Panc1 (cell line): ENCODE measurements at regions of chr9 and their contacts with region 1.

Region 1: DNA sequence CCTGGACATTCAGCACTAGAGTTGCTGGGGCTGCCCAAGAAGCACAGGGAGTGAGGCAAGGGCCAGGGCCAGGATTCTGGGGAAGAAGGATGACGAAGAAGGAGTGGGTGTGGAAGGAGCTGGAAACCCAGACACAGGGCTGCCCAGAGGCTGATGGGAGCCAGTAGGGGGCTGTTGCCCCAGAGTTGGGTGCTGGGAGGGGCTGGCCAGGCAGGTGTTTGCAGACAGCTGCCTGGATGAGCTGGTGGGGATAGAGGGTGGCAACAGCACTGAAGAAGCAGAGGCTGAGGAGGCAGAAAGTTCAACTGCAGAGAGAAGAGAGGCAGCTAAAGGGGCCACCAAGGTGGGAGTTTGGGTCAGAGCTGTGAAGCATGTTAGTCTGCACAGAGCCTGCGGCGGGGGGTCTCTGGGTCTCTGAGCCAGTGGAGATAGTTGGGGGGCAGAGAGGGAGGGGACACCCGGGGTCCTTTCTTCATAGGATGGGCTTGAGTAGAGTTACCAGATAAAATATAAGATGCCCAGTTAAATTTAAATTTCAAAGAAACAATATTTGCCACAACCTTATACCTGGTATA is 2.5 kb upstream of the AQP7 start:
- DNase-seq: no peak
- ATAC-seq: peak; percentile 46; the same call in 1 of the 2 replicates
- H3K4me3 ChIP-seq: no peak overlapping the region
- H3K27ac ChIP-seq: no peak overlapping the region
- H3K4me1 ChIP-seq: 0 out of 2 replicates have a peak, but pooled peaks cover 3% of the 10 kb centered on the region
- H3K27me3 ChIP-seq: no peaks in the 10 kb centered on the region
- CTCF ChIP-seq: no peak

Region 2: GRCh38 chr9:33415501-33416038 is 10.7 kb after region 1 on chr9:
- CTCF ChIA-PET with region 1: interaction called, 11 read pairs
- POLR2A ChIA-PET with region 1: no interaction called
- in situ Hi-C with region 1: no loop called
- intact Hi-C with region 1: no loop called
- DNase-seq: peak; percentile 67
- ATAC-seq: peak; percentile 88
- H3K4me3 ChIP-seq: no peak overlapping the region
- H3K27ac ChIP-seq: peak overlapping the region; percentile 24; the same call in 1 of the 2 replicates
- H3K4me1 ChIP-seq: peaks cover 27% of the 10 kb centered on the region
- H3K27me3 ChIP-seq: no peaks in the 10 kb centered on the region
- CTCF ChIP-seq: no peak

Region 3: GRCh38 chr9:33446946-33447798 is 42.3 kb after region 1 on chr9 and contains the start of gene AQP3:
- CTCF ChIA-PET with region 1: interaction called, 9 read pairs
- POLR2A ChIA-PET with region 1: interaction called, 11 read pairs
- in situ Hi-C with region 1: no loop called
- intact Hi-C with region 1: loop called (anchors 5 kb)
- DNase-seq: no peak
- ATAC-seq: peak; percentile 89
- H3K4me3 ChIP-seq: peak within 1 kb of the TSS; percentile 20 to 37
- H3K27ac ChIP-seq: no peak within 1 kb of the TSS
- H3K4me1 ChIP-seq: peaks cover 7% of the 10 kb centered on the region; the same call in 1 of the 2 replicates
- H3K27me3 ChIP-seq: peaks cover 3% of the 10 kb centered on the region
- CTCF ChIP-seq: no peak
- total RNA-seq, gene AQP3: 1.0 TPM

Region 4: GRCh38 chr9:33452828-33453271 is 48.0 kb after region 1 on chr9:
- CTCF ChIA-PET with region 1: interaction called, 9 read pairs
- POLR2A ChIA-PET with region 1: interaction called, 11 read pairs
- in situ Hi-C with region 1: no loop called
- intact Hi-C with region 1: loop called (anchors 5 kb)
- DNase-seq: no peak
- ATAC-seq: peak; percentile 74
- H3K4me3 ChIP-seq: no peak overlapping the region
- H3K27ac ChIP-seq: no peak overlapping the region
- H3K4me1 ChIP-seq: no peaks in the 10 kb centered on the region
- H3K27me3 ChIP-seq: peaks cover 2% of the 10 kb centered on the region
- CTCF ChIP-seq: no peak

Region 5: DNA sequence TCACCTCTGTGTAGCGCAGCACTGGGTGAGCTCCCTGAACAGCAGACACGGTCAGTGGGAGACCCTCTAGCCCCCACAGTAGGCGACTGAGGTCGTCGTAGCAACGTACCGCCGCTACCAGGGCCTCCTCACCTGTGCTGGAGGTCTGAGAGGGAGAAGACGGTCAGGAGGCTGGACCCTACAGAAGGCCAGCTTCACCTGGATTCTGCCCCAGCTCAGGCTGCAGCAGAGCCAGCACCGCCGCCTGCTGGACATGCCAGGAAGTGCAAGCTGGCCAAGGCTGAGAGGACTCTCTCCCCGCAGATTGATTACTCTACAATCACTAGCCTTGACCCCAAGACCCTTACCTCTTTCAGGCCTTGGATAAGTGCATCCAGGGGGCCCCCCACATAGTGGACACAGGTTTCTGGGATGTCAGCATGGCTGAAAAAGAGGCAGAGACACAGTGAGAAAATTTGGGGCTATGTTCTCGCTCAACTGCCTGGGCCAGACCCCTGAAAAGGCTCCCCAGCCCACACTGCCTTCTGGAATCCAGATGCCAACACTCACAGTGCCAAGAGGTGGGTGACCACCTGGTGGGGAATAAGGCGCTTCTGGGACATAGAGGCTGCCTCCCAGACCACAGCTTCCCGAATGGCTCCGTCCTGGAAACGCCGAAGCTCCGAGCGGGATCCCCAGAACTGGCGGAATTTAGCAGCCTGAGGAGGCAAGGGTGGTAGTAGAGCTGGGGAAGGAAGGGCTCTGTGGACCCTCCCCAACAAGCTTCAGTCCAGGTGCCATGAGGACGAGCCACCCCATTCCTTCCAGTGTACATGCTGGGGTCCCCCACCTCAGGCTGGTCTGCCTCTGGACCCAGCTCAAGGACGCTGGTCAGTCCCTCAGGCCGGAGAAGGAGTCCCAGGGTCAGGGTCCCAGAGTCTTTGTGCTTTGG is 62.0 kb after region 1 on chr9:
- CTCF ChIA-PET with region 1: interaction called, 14 read pairs
- POLR2A ChIA-PET with region 1: no interaction called
- in situ Hi-C with region 1: no loop called
- intact Hi-C with region 1: loop called (anchors 5 kb)
- DNase-seq: no peak
- ATAC-seq: peak; percentile 81
- H3K4me3 ChIP-seq: no peak overlapping the region
- H3K27ac ChIP-seq: no peak overlapping the region
- H3K4me1 ChIP-seq: 0 out of 2 replicates have a peak, but pooled peaks cover under 1% of the 10 kb centered on the region
- H3K27me3 ChIP-seq: no peaks in the 10 kb centered on the region
- CTCF ChIP-seq: no peak